Motor neuron (in vitro differentiated cells): ENCODE measurements at regions of chr4 and their contacts with region 1.

Region 1: DNA sequence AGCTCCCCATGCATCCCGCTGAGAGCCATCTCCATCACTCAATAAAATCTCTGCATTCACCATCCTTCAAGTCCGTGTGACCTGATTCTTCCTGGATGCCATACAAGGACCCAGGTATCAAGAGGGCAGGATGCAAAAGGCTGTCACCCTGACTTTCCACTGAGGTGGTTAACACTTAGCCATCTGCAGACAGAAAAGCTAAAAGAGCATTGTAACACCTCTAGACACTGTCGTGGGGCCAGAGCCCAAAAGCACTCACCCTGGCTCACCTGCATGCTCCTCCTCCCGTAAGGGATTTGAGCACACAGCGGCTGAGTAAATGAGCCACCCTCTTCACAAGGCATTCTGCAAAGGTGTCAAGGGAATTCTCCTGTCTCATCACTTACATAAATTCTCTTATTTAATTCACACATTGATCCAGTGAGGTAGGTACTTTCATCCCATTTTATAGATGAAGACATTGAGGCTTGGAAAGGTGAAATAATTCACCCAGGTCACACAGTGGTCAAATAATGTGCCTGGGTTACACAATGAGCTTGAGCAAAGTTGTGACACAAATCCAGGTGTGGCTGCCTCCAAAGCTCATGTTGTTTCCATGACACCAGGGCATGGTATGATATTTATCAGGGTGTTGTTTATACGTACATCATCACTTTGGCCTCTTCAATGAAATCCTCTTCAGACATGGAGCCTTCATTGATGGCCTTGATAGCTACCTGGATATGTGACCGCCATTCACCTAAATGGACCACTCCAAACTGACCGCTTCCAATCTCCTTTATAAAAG is 48.0 kb downstream of the TXK start:
- ATAC-seq: no peak
- H3K4me3 ChIP-seq: no peak overlapping the region
- H3K27ac ChIP-seq: no peak overlapping the region
- H3K4me1 ChIP-seq: no peaks in the 10 kb centered on the region

Region 2: GRCh38 chr4:48002267-48002666 is 83.7 kb before region 1 on chr4:
- in situ Hi-C with region 1: loop called in 1 of 9 experiments (anchors 5 kb)
- ATAC-seq: no peak
- H3K4me3 ChIP-seq: no peak overlapping the region
- H3K27ac ChIP-seq: no peak overlapping the region
- H3K4me1 ChIP-seq: no peaks in the 10 kb centered on the region

Region 3: GRCh38 chr4:48388525-48389154 is 302.6 kb after region 1 on chr4:
- in situ Hi-C with region 1: no loop called
- ATAC-seq: peak in 4 of 8 experiments; percentile 43 to 71 (median 56)
- H3K4me3 ChIP-seq: no peak overlapping the region
- H3K27ac ChIP-seq: no peak overlapping the region
- H3K4me1 ChIP-seq: no peaks in the 10 kb centered on the region